Lower leg skin (tissue), 4 donors: ENCODE measurements at regions of chr15 and their contacts with region 1.

Region 1: DNA sequence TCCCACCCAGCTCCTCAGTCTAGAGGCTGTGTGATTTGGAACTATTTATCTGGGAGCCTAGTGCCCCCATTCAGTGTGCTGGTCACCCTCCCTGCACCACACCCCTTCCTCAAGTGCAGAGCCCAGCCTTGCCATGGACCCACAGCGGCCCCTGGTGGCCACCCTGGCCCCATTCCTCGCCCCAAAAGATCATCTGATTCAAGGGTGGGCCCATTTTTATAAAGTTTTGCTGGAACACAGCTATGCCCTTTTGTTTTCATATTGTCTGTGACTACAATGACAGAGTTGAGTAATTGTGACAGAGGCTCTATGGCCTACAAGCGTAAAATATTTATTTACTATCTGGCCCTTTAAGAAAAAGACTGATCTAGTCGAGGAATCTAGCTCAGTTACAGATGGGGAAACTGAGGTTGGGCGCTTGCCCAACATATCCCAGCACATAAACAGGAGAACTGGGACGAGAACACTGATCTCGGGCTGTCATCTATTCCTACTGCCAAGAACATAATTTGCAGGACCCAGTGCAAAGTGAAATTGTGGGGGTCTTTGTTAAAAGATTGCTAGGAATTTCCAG is 1.8 kb downstream of the FES start:
- DNase-seq: peak; percentile 75 to 97
- H3K4me3 ChIP-seq: no peak overlapping the region
- CTCF ChIP-seq: peak in 1 of 3 donors; percentile 89
- POLR2A ChIP-seq: no peak

Region 2: DNA sequence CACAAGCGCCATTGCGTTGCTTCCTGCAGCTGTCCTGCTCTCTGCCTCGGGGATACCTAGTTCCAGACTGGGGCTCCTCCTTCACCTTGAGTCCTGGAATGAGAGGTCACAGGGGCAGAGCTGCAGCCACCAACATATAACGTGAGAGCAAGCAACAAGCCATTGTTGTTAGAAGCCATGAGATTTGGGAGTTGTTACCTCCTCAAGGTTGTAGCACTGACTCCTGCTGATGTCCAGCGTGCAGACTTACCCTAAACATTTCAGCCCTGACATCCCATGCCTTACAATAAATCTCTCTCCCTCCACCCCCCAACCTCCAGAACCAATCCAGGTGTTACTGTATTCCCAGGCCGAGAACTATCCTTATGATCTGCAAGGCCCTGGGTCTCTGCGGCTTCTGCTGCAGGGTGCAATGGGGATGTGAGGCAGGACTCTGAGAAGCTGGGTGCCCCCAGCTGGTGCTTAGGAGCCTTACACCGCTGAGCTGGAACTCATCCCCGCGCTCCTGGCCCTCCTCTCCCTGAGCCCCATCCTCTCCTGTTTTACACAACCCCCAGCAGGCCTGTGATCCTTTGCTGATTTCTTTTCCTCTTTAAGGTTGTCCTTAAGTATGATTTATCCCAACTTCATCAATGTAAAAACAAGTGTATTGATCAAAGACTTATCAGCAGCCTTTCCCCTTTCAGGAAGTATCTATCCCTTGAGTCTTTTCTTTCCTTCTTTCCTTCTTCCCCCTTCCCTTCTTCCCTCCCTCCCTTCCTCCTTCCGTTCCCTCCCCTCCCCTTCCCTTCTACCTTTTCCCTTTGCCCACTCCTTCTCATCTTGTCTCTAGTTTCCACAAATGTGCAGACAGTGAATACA is 1882.0 kb before region 1 on chr15:
- intact Hi-C with region 1: loop called (anchors 5 kb)
- DNase-seq: peak in 1 of 2 donors; percentile 72
- H3K4me3 ChIP-seq: no peak overlapping the region
- CTCF ChIP-seq: no peak
- POLR2A ChIP-seq: no peak

Region 3: GRCh38 chr15:90648137-90649070 is 237.7 kb before region 1 on chr15:
- intact Hi-C with region 1: loop called (anchors 5 kb)
- DNase-seq: peak; percentile 92 to 96
- H3K4me3 ChIP-seq: no peak overlapping the region
- CTCF ChIP-seq: peak in 1 of 3 donors; percentile 83
- POLR2A ChIP-seq: no peak